Aorta (tissue), 5 donors: ENCODE measurements at regions of chr4 and their contacts with region 1.

Region 1: DNA sequence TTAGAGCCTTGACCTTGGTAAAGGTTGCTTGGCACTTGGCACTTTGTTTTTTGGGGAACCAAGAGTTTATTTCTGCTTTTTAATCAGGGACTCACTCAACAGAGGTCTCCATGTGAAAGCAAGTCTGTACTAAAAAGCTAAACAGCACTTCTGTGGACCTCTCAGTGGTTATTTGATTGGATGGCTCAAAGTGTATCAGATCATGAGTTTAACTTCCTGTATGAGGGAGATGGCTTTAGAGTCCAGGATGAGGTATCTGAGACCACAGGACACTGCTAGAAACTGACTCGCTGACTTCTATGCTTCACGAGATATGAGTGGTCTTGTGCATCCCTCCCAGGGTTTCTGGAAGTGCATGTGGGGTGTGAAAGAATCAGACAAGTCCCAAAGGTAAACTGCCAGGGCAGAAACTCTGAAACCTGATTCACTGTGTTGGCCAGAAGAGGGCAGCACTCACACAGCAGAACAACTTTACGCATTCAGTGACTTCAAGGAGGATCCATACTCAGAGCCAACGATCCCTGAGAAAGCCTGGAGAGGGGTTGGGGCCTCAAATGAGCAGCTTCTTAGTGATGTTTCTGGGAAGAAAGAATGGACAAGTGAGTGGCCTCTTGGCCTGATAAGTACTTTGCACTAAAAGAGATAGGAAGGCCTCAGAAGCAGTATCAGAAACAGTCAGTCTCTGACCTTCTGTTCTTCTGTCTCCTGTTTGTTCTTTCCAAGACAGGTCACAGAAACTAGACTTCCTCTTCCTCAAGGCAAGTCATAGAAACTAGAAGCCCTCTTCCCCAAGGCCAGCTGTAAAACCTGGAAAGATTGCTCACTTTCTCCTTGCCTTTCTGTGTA is 220.3 kb upstream of the CXCL13 start:
- DNase-seq: peak in 1 of 2 donors; percentile 56
- ATAC-seq: peak; percentile 77
- H3K4me3 ChIP-seq: no peak overlapping the region
- H3K27ac ChIP-seq: no peak overlapping the region
- H3K4me1 ChIP-seq: no peaks in the 10 kb centered on the region
- H3K27me3 ChIP-seq: no peaks in the 10 kb centered on the region

Region 2: GRCh38 chr4:77433418-77433733 is 48.0 kb after region 1 on chr4:
- intact Hi-C with region 1: loop called (anchors 5 kb)
- DNase-seq: no peak
- ATAC-seq: peak; percentile 77
- H3K4me3 ChIP-seq: no peak overlapping the region
- H3K27ac ChIP-seq: no peak overlapping the region
- H3K4me1 ChIP-seq: peaks cover 2 to 14% of the 10 kb centered on the region in 2 donors
- H3K27me3 ChIP-seq: no peaks in the 10 kb centered on the region

Region 3: GRCh38 chr4:77493120-77493752 is 107.9 kb after region 1 on chr4:
- intact Hi-C with region 1: no loop called
- DNase-seq: no peak
- ATAC-seq: no peak
- H3K4me3 ChIP-seq: no peak overlapping the region
- H3K27ac ChIP-seq: no peak overlapping the region
- H3K4me1 ChIP-seq: no peaks in the 10 kb centered on the region
- H3K27me3 ChIP-seq: no peaks in the 10 kb centered on the region

Region 4: DNA sequence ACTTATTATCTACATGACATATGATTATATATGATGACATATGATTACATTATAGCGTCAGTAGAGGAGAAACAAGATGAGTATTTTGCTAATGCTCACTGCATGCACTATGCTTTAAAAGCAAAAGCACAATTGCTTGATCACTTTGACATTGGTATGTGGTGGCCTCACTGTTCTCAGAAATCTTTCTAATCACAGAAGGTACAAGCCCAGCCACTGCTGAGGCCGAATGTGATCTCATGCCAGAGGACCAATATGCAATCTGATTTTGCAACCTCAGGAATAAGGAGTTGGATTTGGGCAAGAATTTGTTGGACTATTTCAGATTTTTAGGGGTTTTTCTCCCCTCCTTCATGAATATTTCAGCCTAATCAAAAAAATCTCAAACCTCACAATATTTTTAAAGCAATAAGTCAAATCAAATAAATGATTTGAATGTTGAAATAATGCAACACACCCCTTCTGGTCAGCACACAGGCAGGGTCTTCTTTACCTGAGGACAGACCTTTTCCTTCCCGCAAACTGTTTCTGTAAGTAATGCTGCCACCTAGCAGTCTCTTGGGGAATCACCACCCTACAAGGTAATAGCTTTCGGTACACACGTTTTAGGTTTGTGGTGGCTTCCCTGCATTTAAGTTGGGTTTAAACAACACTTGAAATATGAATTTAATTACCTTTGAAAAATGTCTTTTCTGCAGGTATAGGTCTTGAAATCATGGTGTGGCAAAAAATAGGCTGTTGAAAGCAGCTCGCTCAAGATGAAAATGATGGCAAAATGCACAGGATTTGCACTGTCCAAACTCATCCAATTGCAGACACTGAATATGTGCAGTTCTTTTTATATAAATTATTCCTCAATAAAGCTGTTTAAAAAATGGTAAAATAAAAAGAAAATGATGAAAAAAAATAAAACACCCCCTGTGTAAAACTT is 215.4 kb after region 1 on chr4:
- intact Hi-C with region 1: loop called (anchors 1 to 5 kb)
- DNase-seq: no peak
- ATAC-seq: no peak
- H3K4me3 ChIP-seq: no peak overlapping the region
- H3K27ac ChIP-seq: no peak overlapping the region
- H3K4me1 ChIP-seq: no peaks in the 10 kb centered on the region
- H3K27me3 ChIP-seq: no peaks in the 10 kb centered on the region

Region 5: DNA sequence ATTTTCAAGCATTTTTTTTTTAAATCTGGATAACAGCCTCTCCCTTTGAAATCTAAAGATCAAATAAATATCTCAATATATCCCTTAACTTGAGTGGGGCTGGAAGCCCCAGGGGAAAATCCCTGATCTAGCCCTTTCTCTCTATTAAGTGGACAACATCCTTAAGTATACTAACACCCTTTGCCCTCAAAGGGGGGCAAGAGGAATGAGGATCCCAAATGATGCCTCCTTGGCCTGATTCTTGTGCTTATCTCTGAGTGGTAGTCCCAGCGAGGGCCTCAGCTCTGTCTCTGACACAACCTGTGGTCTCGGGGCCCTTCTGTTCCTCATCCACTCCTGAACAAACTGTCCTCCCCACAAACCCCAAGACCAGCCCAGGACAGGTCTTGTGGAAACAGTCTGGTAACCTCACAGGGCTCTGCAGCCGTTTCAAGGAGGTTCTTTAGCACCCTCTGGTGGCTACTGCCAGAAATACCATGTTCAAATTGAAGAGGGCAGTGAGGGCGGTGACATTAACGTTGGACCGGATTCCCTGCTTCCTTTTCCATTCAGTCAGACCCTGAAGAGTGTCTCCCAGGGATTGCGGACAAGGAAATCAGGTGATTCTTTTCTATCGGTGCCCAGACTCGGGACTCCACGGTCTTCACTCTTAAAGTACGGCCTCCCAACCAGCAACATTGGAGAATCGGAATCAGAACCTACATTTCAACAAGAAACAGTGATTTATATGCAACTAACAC is 233.2 kb after region 1 on chr4:
- intact Hi-C with region 1: loop called (anchors 2 to 5 kb)
- DNase-seq: peak in 1 of 2 donors; percentile 55
- ATAC-seq: peak; percentile 86
- H3K4me3 ChIP-seq: no peak overlapping the region
- H3K27ac ChIP-seq: no peak overlapping the region
- H3K4me1 ChIP-seq: no peaks in the 10 kb centered on the region
- H3K27me3 ChIP-seq: no peaks in the 10 kb centered on the region

Region 6: DNA sequence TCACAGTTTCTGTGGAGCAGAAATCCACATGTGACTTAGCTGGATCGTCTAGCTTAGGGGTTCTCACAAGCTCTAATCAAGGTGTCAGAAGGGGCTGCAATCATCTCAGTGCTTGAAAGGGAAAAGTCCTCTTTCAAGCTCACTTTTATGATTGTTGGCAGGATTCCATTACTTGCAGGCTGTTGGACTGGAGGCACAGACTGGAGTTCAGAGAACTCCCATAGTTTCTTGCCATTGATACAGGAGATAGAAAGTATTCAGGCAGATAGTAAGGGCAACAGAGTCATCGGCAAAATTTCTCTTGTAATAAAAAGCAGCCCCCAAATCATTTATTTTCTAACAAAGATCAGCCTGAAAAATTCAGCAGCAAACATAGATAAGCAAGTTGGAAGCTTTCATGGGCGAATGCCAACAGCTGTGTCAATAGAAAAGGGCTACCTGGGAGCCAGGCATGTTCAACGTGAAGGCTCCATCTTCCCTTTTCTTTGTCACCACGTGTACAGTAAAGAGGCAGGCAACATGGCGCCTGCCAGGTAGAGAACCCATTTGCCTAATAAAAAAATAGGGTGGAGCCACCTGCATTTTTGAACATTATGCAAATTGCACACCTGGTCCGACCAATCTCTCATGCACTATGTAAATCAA is 284.7 kb after region 1 on chr4:
- intact Hi-C with region 1: no loop called
- DNase-seq: no peak
- ATAC-seq: no peak
- H3K4me3 ChIP-seq: no peak overlapping the region
- H3K27ac ChIP-seq: no peak overlapping the region
- H3K4me1 ChIP-seq: no peaks in the 10 kb centered on the region
- H3K27me3 ChIP-seq: no peaks in the 10 kb centered on the region